Thyroid gland (tissue), 4 donors: ENCODE measurements at regions of chr2 and their contacts with region 1.

Region 1: DNA sequence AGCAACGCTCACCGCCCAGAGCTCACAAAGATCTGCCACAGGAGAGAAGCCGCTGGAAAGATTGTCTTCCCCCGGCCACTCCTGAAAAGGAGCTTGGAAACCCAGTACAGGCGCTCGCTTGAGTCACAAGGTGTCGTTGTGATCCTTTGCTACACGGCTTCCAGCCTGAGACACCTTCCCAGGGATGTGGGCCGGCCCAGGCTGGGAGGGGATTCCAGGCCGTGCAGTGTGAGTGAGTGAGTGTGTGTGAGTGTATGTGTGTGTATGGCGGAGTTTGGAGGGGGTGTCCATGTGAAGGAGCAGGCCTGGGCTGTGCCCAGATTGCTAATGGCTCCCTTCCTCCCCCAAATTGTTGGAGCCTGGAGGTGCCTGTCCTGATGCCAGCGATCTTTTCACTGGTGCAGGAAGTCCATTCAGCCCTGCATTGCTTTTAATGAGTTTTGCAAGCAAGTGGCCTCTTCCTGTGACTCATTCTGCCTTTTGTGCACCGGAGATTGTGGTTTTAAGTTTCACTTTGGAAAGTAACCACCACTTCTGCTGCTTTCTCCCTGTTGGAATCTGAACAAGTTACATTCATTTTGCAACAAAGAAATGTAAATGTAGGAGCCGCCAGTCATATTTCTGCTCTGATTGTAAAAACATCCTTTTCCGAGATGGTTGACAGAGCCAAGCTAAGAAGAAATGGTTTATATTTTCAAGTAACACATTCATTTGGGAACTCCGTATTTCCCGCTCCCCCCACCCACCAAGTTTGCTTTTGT is 83.7 kb downstream of the LPIN1 start:
- DNase-seq: peak; percentile 73 to 83
- H3K4me3 ChIP-seq: no peak overlapping the region
- H3K27ac ChIP-seq: peak overlapping the region; percentile 65 to 91 (median 71)
- H3K4me1 ChIP-seq: peaks cover 18 to 20% of the 10 kb centered on the region in 2 donors
- H3K27me3 ChIP-seq: no peaks in the 10 kb centered on the region
- CTCF ChIP-seq: peak in 3 of 6 experiments; percentile 28 to 43 (median 35)
- POLR2A ChIP-seq: no peak

Region 2: GRCh38 chr2:11930211-11930761 is 100.2 kb after region 1 on chr2:
- intact Hi-C with region 1: no loop called
- DNase-seq: peak in 1 of 2 donors; percentile 6
- H3K4me3 ChIP-seq: no peak overlapping the region
- H3K27ac ChIP-seq: no peak overlapping the region
- H3K4me1 ChIP-seq: no peaks in the 10 kb centered on the region
- H3K27me3 ChIP-seq: no peaks in the 10 kb centered on the region
- CTCF ChIP-seq: no peak
- POLR2A ChIP-seq: no peak

Region 3: GRCh38 chr2:13006829-13007717 is 1176.9 kb after region 1 on chr2:
- intact Hi-C with region 1: loop called (anchors 10 kb)
- DNase-seq: peak; percentile 39 to 49
- H3K4me3 ChIP-seq: no peak overlapping the region
- H3K27ac ChIP-seq: no peak overlapping the region
- H3K4me1 ChIP-seq: no peaks in the 10 kb centered on the region
- H3K27me3 ChIP-seq: no peaks in the 10 kb centered on the region
- CTCF ChIP-seq: peak; percentile 74 to 88 (median 80)
- POLR2A ChIP-seq: no peak